AG04450 (cell line): ENCODE measurements at regions of chr5 and their contacts with region 1.

Region 1: GRCh38 chr5:76601470-76601869 is 21.7 kb downstream of the F2RL2 start:
- DNase-seq: peak; percentile 45
- H3K4me3 ChIP-seq: no peak overlapping the region
- H3K27ac ChIP-seq: no peak overlapping the region
- H3K27me3 ChIP-seq: no peaks in the 10 kb centered on the region
- CTCF ChIP-seq: peak; percentile 81

Region 2: DNA sequence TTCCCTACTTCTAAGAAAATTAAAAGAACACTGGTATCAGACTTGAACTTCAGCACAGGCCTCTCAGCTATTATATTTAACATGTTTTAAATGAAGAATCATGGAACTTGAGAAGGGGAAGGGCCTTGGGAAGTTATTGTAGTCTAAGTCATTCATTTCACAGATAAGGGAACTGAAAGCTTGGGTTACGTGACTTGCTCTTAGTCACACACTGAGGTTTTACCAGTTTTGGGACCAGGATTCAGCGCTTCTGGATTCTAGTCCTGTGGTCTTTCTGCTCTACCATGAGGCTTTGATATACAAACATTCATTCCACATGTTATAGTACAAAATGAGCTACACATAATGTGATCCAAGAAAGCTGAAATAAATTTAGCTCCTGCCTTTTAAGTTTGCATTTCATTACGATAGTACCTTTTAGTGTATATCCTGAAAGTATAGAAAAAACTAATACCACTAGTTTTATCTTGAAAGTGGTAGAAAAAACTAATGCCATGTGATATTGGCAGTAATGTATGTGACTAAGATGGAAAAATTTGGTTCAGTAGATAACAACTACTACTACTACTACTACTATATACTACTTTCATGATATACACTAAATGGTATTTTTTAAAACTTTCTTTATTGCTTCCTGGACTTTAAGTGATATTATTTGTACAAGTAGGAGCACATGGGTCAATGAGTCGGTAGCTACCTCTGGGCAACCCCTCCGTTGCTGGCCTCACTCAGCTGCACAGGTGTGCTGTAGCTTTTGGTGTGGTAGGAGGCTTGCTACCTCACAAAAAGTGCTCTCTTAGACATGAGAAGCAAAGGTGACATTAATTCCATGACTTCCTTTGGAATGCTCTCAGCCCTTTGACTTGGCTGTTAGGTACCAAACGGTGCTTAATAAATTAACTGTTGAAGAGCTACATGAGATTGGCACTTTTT is 19.0 kb before region 1 on chr5:
- CTCF ChIA-PET with region 1: interaction called, 24 read pairs
- POLR2A ChIA-PET with region 1: interaction called, 4 read pairs
- DNase-seq: no peak
- H3K4me3 ChIP-seq: no peak overlapping the region
- H3K27ac ChIP-seq: no peak overlapping the region
- H3K27me3 ChIP-seq: no peaks in the 10 kb centered on the region
- CTCF ChIP-seq: no peak

Region 3: DNA sequence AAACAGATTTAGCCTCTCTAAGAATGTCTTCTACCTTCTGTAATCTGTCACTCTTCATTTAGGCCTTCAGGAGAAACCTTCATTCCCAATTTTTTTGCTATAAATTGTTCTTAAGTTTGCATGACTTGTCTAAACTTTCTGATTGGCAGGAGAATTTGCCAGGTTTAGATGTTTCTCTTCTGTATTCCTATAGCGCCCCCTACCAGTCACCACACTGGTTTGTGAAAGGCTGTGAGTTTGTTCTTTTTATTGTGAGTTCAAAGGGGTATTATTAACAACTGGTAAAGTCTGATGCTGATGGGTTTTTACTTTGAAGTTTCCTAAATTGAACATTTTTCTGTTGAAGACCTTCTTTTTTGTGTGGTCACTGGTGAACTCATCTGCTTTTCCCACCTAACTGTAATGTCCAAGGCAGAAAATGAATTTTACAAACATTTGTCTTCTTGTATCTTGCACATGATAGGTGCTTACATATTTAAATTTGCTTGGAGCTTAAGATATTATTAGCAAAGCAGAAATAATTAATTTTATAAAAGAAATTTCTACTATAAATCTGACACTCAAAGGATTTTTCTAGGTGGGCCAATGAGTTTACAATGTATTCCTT is 40.1 kb after region 1 on chr5:
- CTCF ChIA-PET with region 1: interaction called, 68 read pairs
- POLR2A ChIA-PET with region 1: no interaction called
- DNase-seq: peak; percentile 55
- H3K4me3 ChIP-seq: no peak overlapping the region
- H3K27ac ChIP-seq: no peak overlapping the region
- H3K27me3 ChIP-seq: no peaks in the 10 kb centered on the region
- CTCF ChIP-seq: peak; percentile 87

Region 4: DNA sequence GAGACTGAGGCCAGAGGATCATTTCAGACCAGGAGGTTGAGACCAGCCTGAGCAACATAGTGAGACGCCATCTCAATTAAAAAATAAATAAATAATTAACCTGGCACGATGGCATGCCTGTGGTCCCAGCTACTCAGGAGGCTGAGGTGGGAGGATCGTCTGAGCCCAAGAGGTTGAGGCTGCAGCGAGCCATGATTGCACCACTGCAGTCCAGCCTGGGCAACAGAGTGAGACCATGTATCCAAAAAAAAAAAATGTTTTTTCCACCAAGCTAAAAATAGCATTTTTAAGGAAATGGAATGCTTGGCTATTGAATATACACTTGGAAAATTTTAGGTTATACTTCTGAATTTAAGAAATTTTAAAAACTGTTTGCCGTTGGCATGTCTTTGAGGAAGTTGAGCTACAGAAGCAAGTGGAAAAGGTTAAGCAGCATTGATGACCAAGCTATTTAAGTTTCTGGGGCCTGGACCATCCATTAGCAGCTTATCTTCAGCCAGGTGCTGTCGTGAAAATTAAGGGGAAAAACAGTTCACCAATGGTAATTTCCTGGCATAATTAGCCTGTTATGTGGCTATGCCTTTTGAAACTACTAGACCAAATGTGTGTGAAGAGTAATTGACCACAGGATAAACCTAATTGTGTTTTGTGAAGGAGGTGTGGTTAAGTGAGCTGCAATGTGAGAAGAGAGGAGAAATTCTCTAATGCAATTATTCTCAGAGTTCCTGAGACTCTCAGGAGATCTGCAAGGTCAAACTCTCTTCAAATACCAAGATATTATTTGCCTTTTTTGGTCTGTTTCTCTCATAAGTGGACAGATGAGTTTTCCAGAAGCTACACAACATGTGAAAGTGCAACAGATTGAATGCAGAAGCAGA is 135.4 kb after region 1 on chr5:
- CTCF ChIA-PET with region 1: interaction called, 16 read pairs
- POLR2A ChIA-PET with region 1: no interaction called
- DNase-seq: no peak
- H3K4me3 ChIP-seq: no peak overlapping the region
- H3K27ac ChIP-seq: no peak overlapping the region
- H3K27me3 ChIP-seq: no peaks in the 10 kb centered on the region
- CTCF ChIP-seq: no peak

Region 5: DNA sequence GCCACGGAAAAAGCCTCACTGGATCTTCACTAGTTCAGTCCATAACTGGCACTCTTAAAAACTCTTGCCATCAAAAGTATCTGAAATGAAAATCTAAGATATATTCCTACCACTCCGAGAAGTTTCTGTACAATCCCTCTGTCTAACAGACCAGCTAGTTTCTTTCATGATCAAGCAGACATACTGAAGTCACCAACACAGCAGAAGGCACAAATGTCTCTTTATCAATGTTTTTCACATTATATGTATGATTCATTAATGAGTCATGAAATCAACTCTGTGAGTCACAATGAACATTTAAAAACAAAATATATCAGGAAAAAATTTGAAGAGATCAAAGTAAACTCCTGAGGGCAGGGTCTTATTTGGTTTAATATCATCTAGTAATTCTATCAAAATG is 165.3 kb after region 1 on chr5:
- CTCF ChIA-PET with region 1: interaction called, 21 read pairs
- POLR2A ChIA-PET with region 1: no interaction called
- DNase-seq: no peak
- H3K4me3 ChIP-seq: no peak overlapping the region
- H3K27ac ChIP-seq: no peak overlapping the region
- H3K27me3 ChIP-seq: no peaks in the 10 kb centered on the region
- CTCF ChIP-seq: no peak

Region 6: GRCh38 chr5:76790632-76791290 is 189.3 kb after region 1 on chr5:
- CTCF ChIA-PET with region 1: interaction called, 11 read pairs
- POLR2A ChIA-PET with region 1: no interaction called
- DNase-seq: peak; percentile 94
- H3K4me3 ChIP-seq: no peak overlapping the region
- H3K27ac ChIP-seq: peak overlapping the region; percentile 96
- H3K27me3 ChIP-seq: no peaks in the 10 kb centered on the region
- CTCF ChIP-seq: no peak

Region 7: GRCh38 chr5:77015938-77016569 is 414.6 kb after region 1 on chr5:
- CTCF ChIA-PET with region 1: interaction called, 12 read pairs
- POLR2A ChIA-PET with region 1: no interaction called
- DNase-seq: peak; percentile 23
- H3K4me3 ChIP-seq: no peak overlapping the region
- H3K27ac ChIP-seq: no peak overlapping the region
- H3K27me3 ChIP-seq: peaks cover 2% of the 10 kb centered on the region
- CTCF ChIP-seq: peak; percentile 47